CD4-positive, alpha-beta memory T cell (primary cell): ENCODE measurements at regions of chr5 and their contacts with region 1.

Region 1: GRCh38 chr5:176660860-176661641 is 13.8 kb downstream of the TSPAN17 start:
- DNase-seq: peak in 4 of 5 donors; percentile 76 to 78 (median 77)
- H3K4me3 ChIP-seq: no peak overlapping the region
- H3K4me3 Mint-ChIP-seq: peak overlapping the region in 4 of 8 donors; percentile 13 to 78 (median 23)
- H3K27ac ChIP-seq: no peak overlapping the region
- H3K27ac Mint-ChIP-seq: peak overlapping the region in 4 of 7 donors; percentile 37 to 90 (median 72)
- H3K4me1 ChIP-seq: peaks cover 33% of the 10 kb centered on the region
- H3K4me1 Mint-ChIP-seq: peaks cover 23 to 35% (median 31%) of the 10 kb centered on the region in 4 donors
- H3K27me3 ChIP-seq: no peaks in the 10 kb centered on the region
- H3K27me3 Mint-ChIP-seq: peaks cover 5 to 13% of the 10 kb centered on the region in 2 donors

Region 2: GRCh38 chr5:175202451-175203068 is 1458.5 kb before region 1 on chr5:
- CTCF ChIA-PET with region 1: no interaction called
- POLR2A ChIA-PET with region 1: no interaction called
- intact Hi-C with region 1: no loop called
- DNase-seq: no peak
- H3K4me3 ChIP-seq: no peak overlapping the region
- H3K4me3 Mint-ChIP-seq: no peak overlapping the region
- H3K27ac ChIP-seq: no peak overlapping the region
- H3K27ac Mint-ChIP-seq: no peak overlapping the region
- H3K4me1 ChIP-seq: no peaks in the 10 kb centered on the region
- H3K4me1 Mint-ChIP-seq: no peaks in the 10 kb centered on the region
- H3K27me3 ChIP-seq: no peaks in the 10 kb centered on the region
- H3K27me3 Mint-ChIP-seq: peaks cover 9 to 12% of the 10 kb centered on the region in 2 donors

Region 3: DNA sequence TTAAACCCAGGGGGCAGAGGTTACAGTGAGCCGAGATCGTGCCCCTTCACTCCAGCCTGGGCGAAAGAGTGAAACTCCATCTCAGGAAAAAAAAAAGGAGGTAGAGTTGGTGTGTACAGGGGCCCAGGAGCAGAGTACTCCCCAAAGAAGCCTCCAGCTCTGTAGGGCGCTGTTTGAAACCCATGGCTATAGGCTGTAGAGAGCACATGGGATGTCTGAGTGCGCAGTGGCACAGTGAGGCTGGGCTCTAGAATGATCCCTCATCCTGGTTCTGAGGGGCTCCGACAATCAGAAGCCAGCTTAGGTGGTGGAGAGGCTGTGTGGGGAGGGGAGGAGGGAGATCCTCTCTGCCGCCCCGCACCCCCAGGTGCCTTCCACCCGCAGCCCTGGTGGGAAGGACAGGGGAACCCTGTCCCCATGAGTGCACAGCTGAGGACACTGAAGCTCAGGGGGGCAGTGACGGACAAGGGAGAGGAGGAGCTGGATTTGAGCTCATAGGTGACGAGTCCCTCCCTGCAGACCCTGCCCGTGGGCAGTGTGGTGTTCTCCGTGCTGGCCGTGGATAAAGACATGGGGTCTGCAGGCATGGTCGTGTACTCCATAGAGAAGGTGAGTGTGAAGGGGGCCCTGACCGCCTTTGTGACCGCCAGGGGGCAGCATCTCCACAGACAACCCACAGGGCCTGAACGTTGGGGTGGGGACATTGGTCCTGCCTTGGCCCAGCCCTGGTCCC is 87.3 kb before region 1 on chr5:
- CTCF ChIA-PET with region 1: interaction called, 28 read pairs
- POLR2A ChIA-PET with region 1: no interaction called
- intact Hi-C with region 1: no loop called
- DNase-seq: peak; percentile 62 to 71 (median 67)
- H3K4me3 ChIP-seq: no peak overlapping the region
- H3K4me3 Mint-ChIP-seq: no peak overlapping the region
- H3K27ac ChIP-seq: no peak overlapping the region
- H3K27ac Mint-ChIP-seq: no peak overlapping the region
- H3K4me1 ChIP-seq: peaks cover 6% of the 10 kb centered on the region
- H3K4me1 Mint-ChIP-seq: peaks cover 4 to 16% (median 8%) of the 10 kb centered on the region in 4 donors
- H3K27me3 ChIP-seq: no peaks in the 10 kb centered on the region
- H3K27me3 Mint-ChIP-seq: peaks cover 3 to 9% of the 10 kb centered on the region in 2 donors

Region 4: DNA sequence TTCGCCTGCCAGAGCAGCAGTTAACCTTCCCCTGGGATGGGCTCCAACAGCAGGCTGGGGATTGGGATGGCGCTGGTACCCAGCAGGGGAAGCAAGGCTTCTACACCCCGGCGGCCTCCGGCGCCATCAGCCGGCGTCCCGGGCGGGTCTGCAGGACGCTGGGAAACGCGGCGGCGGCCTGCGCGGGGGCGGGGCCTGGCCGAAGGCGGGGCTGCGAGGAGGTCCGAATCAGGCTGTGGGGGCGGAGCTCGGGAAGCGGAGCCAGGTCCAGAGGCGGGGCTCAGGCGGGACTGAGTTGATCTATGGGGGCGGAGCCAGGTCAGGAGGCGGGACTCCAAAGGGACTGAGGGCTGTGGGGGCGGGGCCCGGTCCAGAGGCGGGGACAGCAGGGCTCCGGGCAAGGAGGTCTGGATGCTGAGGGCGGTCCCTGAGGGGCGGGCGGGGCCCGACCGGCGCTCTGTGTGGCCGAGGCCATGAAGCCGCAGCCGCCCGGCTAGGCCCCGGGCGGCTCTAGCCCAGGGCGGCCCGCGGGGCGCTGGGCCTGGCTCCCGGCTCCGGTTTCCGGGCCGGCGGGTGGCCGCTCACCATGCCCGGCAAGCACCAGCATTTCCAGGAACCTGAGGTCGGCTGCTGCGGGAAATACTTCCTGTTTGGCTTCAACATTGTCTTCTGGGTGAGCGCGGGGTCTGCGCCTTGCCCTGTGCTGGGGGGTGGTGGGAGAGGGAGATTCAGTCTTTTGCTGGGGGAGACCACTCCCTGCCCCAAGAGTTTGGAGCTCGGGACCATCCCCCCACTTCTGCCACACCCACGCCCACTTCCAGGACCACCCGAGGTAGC is 13.8 kb before region 1 on chr5 and contains the start of gene TSPAN17:
- CTCF ChIA-PET with region 1: interaction called, 129 read pairs
- POLR2A ChIA-PET with region 1: interaction called, 55 read pairs
- intact Hi-C with region 1: loop called (anchors 1 kb)
- DNase-seq: peak; percentile 94 to 97 (median 95)
- H3K4me3 ChIP-seq: peak within 1 kb of the TSS; percentile 73 to 76
- H3K4me3 Mint-ChIP-seq: peak within 1 kb of the TSS; percentile 85 to 94 (median 90)
- H3K27ac ChIP-seq: peak within 1 kb of the TSS; percentile 62
- H3K27ac Mint-ChIP-seq: peak within 1 kb of the TSS; percentile 80 to 95 (median 93)
- H3K4me1 ChIP-seq: peaks cover 50% of the 10 kb centered on the region
- H3K4me1 Mint-ChIP-seq: peaks cover 31 to 69% (median 43%) of the 10 kb centered on the region in 4 donors
- H3K27me3 ChIP-seq: no peaks in the 10 kb centered on the region
- H3K27me3 Mint-ChIP-seq: no peaks in the 10 kb centered on the region
- total RNA-seq, gene TSPAN17: 27.4 to 30.7 TPM

Region 5: GRCh38 chr5:176822041-176822792 is 161.2 kb after region 1 on chr5:
- CTCF ChIA-PET with region 1: interaction called, 3 read pairs
- POLR2A ChIA-PET with region 1: no interaction called
- intact Hi-C with region 1: loop called (anchors 10 kb)
- DNase-seq: no peak
- H3K4me3 ChIP-seq: no peak overlapping the region
- H3K4me3 Mint-ChIP-seq: no peak overlapping the region
- H3K27ac ChIP-seq: no peak overlapping the region
- H3K27ac Mint-ChIP-seq: no peak overlapping the region
- H3K4me1 ChIP-seq: peaks cover 9% of the 10 kb centered on the region
- H3K4me1 Mint-ChIP-seq: peaks cover 6 to 16% (median 8%) of the 10 kb centered on the region in 4 donors
- H3K27me3 ChIP-seq: peaks cover 9% of the 10 kb centered on the region
- H3K27me3 Mint-ChIP-seq: peaks cover 27 to 38% of the 10 kb centered on the region in 2 donors

Region 6: GRCh38 chr5:176959051-176959450 is 298.0 kb after region 1 on chr5:
- CTCF ChIA-PET with region 1: interaction called, 41 read pairs
- POLR2A ChIA-PET with region 1: interaction called, 3 read pairs
- intact Hi-C with region 1: loop called (anchors 2 kb)
- DNase-seq: peak in 4 of 5 donors; percentile 24 to 38 (median 31)
- H3K4me3 ChIP-seq: no peak overlapping the region
- H3K4me3 Mint-ChIP-seq: no peak overlapping the region
- H3K27ac ChIP-seq: no peak overlapping the region
- H3K27ac Mint-ChIP-seq: no peak overlapping the region
- H3K4me1 ChIP-seq: no peaks in the 10 kb centered on the region
- H3K4me1 Mint-ChIP-seq: peaks cover 5 to 6% (median 6%) of the 10 kb centered on the region in 4 donors
- H3K27me3 ChIP-seq: no peaks in the 10 kb centered on the region
- H3K27me3 Mint-ChIP-seq: no peaks in the 10 kb centered on the region